Natural killer cell (primary cell): ENCODE measurements at regions of chr15 and their contacts with region 1.

Region 1: GRCh38 chr15:65028921-65029735 is at the start of gene MTFMT:
- DNase-seq: peak; percentile 87 to 94
- ATAC-seq: peak; percentile 97
- H3K4me3 ChIP-seq: peak within 1 kb of the TSS; percentile 79
- H3K4me3 Mint-ChIP-seq: peak within 1 kb of the TSS; percentile 91
- H3K27ac ChIP-seq: peak within 1 kb of the TSS; percentile 49
- H3K27ac Mint-ChIP-seq: peak within 1 kb of the TSS; percentile 16 to 79
- H3K4me1 ChIP-seq: peaks cover 20% of the 10 kb centered on the region
- H3K4me1 Mint-ChIP-seq: peaks cover 13 to 20% of the 10 kb centered on the region in 2 donors
- H3K27me3 ChIP-seq: peaks cover 4% of the 10 kb centered on the region
- H3K27me3 Mint-ChIP-seq: peaks cover 0 to 13% of the 10 kb centered on the region in 2 donors
- CTCF ChIP-seq: no peak
- total RNA-seq, gene MTFMT: 9.3 to 13.6 (median 12.2) TPM

Region 2: DNA sequence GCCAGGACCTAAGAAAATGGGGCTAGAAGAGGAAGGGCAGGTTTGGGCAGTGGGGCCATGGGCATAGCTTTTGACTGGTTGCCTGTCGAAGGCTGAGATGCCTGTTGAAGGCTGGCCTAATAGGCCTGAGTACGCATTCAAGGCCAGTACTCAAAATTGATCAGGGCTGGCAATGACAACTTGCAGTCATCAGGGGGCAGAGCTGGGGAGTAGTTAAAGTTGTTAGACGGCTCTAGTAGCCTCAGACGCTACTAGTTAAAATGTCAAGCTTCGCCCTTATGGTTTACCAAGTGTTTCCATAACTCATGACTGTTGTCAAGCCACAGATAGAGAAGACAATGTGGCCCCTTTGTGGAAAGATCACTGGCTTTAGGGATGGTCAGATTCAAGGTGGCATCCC is 68.1 kb before region 1 on chr15:
- intact Hi-C with region 1: no loop called
- DNase-seq: no peak
- ATAC-seq: no peak
- H3K4me3 ChIP-seq: no peak overlapping the region
- H3K4me3 Mint-ChIP-seq: no peak overlapping the region
- H3K27ac ChIP-seq: no peak overlapping the region
- H3K27ac Mint-ChIP-seq: no peak overlapping the region
- H3K4me1 ChIP-seq: no peaks in the 10 kb centered on the region
- H3K4me1 Mint-ChIP-seq: no peaks in the 10 kb centered on the region
- H3K27me3 ChIP-seq: no peaks in the 10 kb centered on the region
- H3K27me3 Mint-ChIP-seq: no peaks in the 10 kb centered on the region
- CTCF ChIP-seq: no peak

Region 3: GRCh38 chr15:64989416-64990167 is 39.5 kb before region 1 on chr15 and contains the start of gene SPG21:
- intact Hi-C with region 1: loop called (anchors 1 kb)
- DNase-seq: peak; percentile 93 to 95
- ATAC-seq: peak; percentile 86 to 96 (median 89)
- H3K4me3 ChIP-seq: peak within 1 kb of the TSS; percentile 91
- H3K4me3 Mint-ChIP-seq: peak within 1 kb of the TSS; percentile 99
- H3K27ac ChIP-seq: peak within 1 kb of the TSS; percentile 92
- H3K27ac Mint-ChIP-seq: peak within 1 kb of the TSS; percentile 94 to 96
- H3K4me1 ChIP-seq: peaks cover 20% of the 10 kb centered on the region
- H3K4me1 Mint-ChIP-seq: peaks cover 31 to 34% of the 10 kb centered on the region in 2 donors
- H3K27me3 ChIP-seq: no peaks in the 10 kb centered on the region
- H3K27me3 Mint-ChIP-seq: no peaks in the 10 kb centered on the region
- CTCF ChIP-seq: no peak
- total RNA-seq, gene SPG21: 39.6 to 52.3 (median 40.4) TPM

Region 4: DNA sequence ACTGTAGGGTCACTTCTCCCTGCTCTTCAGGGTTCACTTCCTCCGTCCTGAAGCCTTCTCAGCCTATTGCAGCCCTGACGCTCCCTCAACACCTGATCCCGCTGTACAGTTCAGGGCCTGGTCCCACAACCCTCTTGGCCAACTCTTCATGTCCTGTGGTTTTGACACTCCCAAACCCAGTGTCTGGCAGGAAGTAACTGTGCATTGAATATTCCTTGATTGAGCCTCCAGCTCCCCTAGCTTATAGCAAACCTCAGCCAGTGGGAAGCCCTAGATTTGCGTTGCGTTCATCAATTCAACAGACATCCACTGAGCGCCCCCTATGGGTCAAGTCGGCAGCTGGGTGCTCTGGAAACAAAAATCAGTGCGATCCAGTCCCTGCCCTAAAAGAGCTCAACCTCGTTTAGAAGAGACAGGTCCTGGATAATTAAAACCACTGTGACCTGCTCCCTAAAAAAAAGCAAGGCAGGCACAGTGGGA is 72.3 kb after region 1 on chr15:
- intact Hi-C with region 1: no loop called
- DNase-seq: peak in 1 of 2 donors; percentile 62
- ATAC-seq: peak in 1 of 3 donors; percentile 41
- H3K4me3 ChIP-seq: no peak overlapping the region
- H3K4me3 Mint-ChIP-seq: no peak overlapping the region
- H3K27ac ChIP-seq: no peak overlapping the region
- H3K27ac Mint-ChIP-seq: no peak overlapping the region
- H3K4me1 ChIP-seq: peaks cover 4% of the 10 kb centered on the region
- H3K4me1 Mint-ChIP-seq: peaks cover 9 to 22% of the 10 kb centered on the region in 2 donors
- H3K27me3 ChIP-seq: no peaks in the 10 kb centered on the region
- H3K27me3 Mint-ChIP-seq: no peaks in the 10 kb centered on the region
- CTCF ChIP-seq: peak; percentile 33